MCF 10A (cell line): ENCODE measurements at regions of chr3 and their contacts with region 1.

Region 1: GRCh38 chr3:194344012-194344411 is 7.1 kb downstream of the CPN2 start:
- DNase-seq: peak; percentile 70
- H3K4me3 Mint-ChIP-seq: no peak overlapping the region
- H3K27ac Mint-ChIP-seq: no peak overlapping the region
- H3K4me1 Mint-ChIP-seq: no peaks in the 10 kb centered on the region
- H3K27me3 Mint-ChIP-seq: no peaks in the 10 kb centered on the region
- CTCF ChIP-seq: peak; percentile 88

Region 2: DNA sequence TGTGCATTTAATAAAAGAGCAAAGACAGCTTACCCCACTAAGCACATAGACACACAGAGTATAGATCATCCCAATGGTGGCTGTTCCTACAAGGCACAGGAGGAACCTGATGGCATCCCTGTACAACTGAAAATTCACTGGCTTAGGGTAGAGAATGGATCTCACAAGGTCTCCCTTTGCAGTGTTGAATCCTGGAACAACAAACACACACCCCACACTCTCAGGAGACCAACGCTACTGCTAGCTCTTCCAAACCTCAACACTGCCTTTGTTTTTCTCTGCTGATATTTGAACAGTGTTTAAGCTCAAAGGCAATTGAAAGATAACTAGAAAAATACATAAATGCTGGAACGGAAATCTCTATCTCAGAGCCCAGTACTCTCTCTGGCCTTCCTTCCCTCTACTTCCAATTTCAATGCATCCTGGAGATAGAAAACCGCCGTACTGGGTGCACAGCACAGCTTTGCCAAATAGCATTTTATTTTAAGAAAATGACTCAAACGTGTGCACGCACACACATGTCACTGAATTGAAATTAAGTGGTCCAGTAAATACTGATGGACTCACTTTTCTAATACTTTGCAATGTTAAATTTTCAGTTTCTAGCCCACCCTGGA is 877.9 kb before region 1 on chr3:
- CTCF ChIA-PET with region 1: no interaction called
- POLR2A ChIA-PET with region 1: no interaction called
- intact Hi-C with region 1: loop called (anchors 5 kb)
- DNase-seq: no peak
- H3K4me3 Mint-ChIP-seq: no peak overlapping the region
- H3K27ac Mint-ChIP-seq: no peak overlapping the region
- H3K4me1 Mint-ChIP-seq: no peaks in the 10 kb centered on the region
- H3K27me3 Mint-ChIP-seq: peaks cover 46% of the 10 kb centered on the region
- CTCF ChIP-seq: no peak

Region 3: GRCh38 chr3:194141415-194142155 is 202.4 kb before region 1 on chr3:
- CTCF ChIA-PET with region 1: interaction called, 11 read pairs
- POLR2A ChIA-PET with region 1: interaction called, 4 read pairs
- intact Hi-C with region 1: no loop called
- DNase-seq: peak; percentile 97
- H3K4me3 Mint-ChIP-seq: peak overlapping the region; percentile 59
- H3K27ac Mint-ChIP-seq: peak overlapping the region; percentile 94
- H3K4me1 Mint-ChIP-seq: peaks cover 26% of the 10 kb centered on the region
- H3K27me3 Mint-ChIP-seq: no peaks in the 10 kb centered on the region
- CTCF ChIP-seq: no peak

Region 4: DNA sequence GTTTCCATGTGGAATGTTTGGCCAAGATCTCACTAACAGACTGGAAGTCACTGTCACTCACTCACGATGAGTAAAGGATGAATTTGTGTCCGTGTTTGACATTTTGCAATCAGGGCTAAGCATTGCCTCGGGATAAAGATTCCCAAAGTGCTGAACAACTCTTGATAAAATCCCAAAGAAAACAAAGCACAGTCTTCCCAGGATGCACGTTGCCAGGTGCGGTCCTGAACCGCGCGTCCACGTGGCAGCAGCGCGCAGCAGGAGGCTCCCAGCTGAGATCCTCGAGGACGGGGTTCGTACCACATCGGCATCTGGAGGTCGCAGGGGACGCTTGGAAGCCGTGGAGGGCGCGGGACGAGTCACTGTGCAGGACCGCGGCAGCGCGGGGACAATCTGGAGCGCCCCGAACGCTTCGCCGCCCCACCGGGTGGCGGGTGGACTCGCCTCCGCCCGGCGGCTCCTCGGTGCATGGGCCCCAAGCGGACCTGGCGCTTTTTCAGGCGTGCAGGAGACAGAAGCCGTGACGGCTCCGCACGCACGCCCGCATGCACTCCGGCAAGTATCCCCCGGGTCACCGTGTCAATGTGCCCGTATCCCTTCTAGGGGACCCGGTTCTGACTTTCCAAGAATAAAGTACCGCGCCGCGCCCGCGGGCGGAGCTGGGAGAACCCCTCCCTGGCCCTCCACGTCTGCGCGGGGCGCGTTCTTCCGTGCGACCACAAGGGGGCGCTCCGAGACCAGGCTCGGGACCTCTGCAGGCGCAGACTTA is 10.6 kb before region 1 on chr3:
- CTCF ChIA-PET with region 1: interaction called, 88 read pairs
- POLR2A ChIA-PET with region 1: interaction called, 9 read pairs
- intact Hi-C with region 1: no loop called
- DNase-seq: peak; percentile 97
- H3K4me3 Mint-ChIP-seq: peak overlapping the region; percentile 77
- H3K27ac Mint-ChIP-seq: peak overlapping the region; percentile 90
- H3K4me1 Mint-ChIP-seq: peaks cover 28% of the 10 kb centered on the region
- H3K27me3 Mint-ChIP-seq: no peaks in the 10 kb centered on the region
- CTCF ChIP-seq: peak; percentile 97

Region 5: GRCh38 chr3:194364314-194364651 is 20.3 kb after region 1 on chr3:
- CTCF ChIA-PET with region 1: interaction called, 44 read pairs
- POLR2A ChIA-PET with region 1: no interaction called
- intact Hi-C with region 1: no loop called
- DNase-seq: no peak
- H3K4me3 Mint-ChIP-seq: no peak overlapping the region
- H3K27ac Mint-ChIP-seq: no peak overlapping the region
- H3K4me1 Mint-ChIP-seq: no peaks in the 10 kb centered on the region
- H3K27me3 Mint-ChIP-seq: peaks cover 47% of the 10 kb centered on the region
- CTCF ChIP-seq: no peak